PC-9 (cell line): ENCODE measurements at regions of chr22 and their contacts with region 1.

Region 1: DNA sequence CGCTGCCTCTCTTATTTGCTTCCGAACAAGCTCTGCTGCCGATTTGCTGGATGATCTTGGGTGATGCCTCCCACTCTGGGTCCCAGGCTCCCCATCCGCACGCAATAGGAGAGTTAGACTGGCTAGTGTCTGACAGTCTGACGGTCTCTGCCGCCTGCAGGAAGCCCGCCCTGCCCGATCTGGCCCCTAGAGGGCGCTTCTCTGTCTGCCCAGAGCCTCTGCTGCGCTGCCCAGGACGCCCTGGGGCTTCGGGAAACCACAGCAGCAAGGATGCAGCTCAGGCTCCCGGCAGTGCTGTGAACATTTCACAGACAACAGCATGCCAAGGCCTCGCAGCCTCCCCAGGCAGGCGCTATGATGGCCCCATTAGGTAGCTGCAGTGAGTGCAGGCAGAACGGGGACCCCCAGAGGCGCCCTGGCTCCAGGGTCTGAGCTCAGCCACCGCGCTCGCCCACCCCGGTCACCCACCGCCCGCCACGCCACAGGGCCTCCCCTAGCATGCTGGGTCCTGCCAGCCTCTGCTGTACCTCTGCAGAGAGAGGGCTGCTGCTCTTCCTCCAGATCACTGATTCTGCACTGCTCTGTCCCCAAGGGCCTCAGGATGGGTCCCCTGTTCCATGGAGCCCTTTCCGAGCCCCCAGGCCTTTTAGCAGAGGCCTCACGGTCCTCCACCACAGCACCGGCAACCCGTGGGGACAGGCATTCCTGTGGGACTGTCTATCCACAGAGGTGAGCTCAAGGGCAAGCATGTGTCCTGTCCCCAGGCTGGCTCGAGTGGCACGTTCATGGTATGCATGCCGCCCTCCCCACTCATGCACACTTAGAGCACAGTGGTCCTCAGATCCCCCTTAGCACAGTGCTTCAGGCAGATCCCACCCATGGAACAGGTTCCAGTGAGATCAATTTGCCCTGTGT is 4.3 kb upstream of the BAIAP2L2 start:
- DNase-seq: peak; percentile 69 to 90
- H3K4me3 ChIP-seq: no peak overlapping the region
- H3K27ac ChIP-seq: no peak overlapping the region
- H3K4me1 ChIP-seq: peaks cover 14% of the 10 kb centered on the region
- H3K27me3 ChIP-seq: no peaks in the 10 kb centered on the region
- CTCF ChIP-seq: peak; percentile 99

Region 2: GRCh38 chr22:38167988-38168431 is 53.3 kb after region 1 on chr22:
- CTCF ChIA-PET with region 1: no interaction called
- POLR2A ChIA-PET with region 1: no interaction called
- intact Hi-C with region 1: no loop called
- DNase-seq: no peak
- H3K4me3 ChIP-seq: no peak overlapping the region
- H3K27ac ChIP-seq: no peak overlapping the region
- H3K4me1 ChIP-seq: peaks cover 26% of the 10 kb centered on the region
- H3K27me3 ChIP-seq: no peaks in the 10 kb centered on the region
- CTCF ChIP-seq: no peak

Region 3: GRCh38 chr22:38181453-38182247 is 66.9 kb after region 1 on chr22 and contains the start of gene PLA2G6:
- CTCF ChIA-PET with region 1: interaction called, 16 read pairs
- POLR2A ChIA-PET with region 1: no interaction called
- intact Hi-C with region 1: loop called (anchors 5 kb)
- DNase-seq: peak; percentile 99 to 100
- H3K4me3 ChIP-seq: peak within 1 kb of the TSS; percentile 66
- H3K27ac ChIP-seq: peak within 1 kb of the TSS; percentile 98
- H3K4me1 ChIP-seq: peaks cover 78% of the 10 kb centered on the region
- H3K27me3 ChIP-seq: no peaks in the 10 kb centered on the region
- CTCF ChIP-seq: no peak
- total RNA-seq, gene PLA2G6: 39.8 and 45.6 TPM in 2 replicates

Region 4: GRCh38 chr22:38214256-38215056 is 99.7 kb after region 1 on chr22:
- CTCF ChIA-PET with region 1: no interaction called
- POLR2A ChIA-PET with region 1: no interaction called
- intact Hi-C with region 1: loop called (anchors 5 kb)
- DNase-seq: no peak
- H3K4me3 ChIP-seq: no peak overlapping the region
- H3K27ac ChIP-seq: no peak overlapping the region
- H3K4me1 ChIP-seq: peaks cover 38% of the 10 kb centered on the region
- H3K27me3 ChIP-seq: no peaks in the 10 kb centered on the region
- CTCF ChIP-seq: no peak